Heart right ventricle (tissue), 16 donors: ENCODE measurements at regions of chr18 and their contacts with region 1.

Region 1: GRCh38 chr18:76803814-76804213 is 18.5 kb upstream of the ZNF236 start:
- DNase-seq: peak; percentile 30 to 63
- ATAC-seq: peak in 5 of 8 donors; percentile 60 to 69 (median 64)
- H3K4me3 ChIP-seq: no peak overlapping the region
- H3K27ac ChIP-seq: no peak overlapping the region
- H3K4me1 ChIP-seq: peaks cover 0 to 18% (median 6%) of the 10 kb centered on the region in 9 donors
- H3K27me3 ChIP-seq: peaks cover 0 to 25% (median 9%) of the 10 kb centered on the region in 7 donors
- CTCF ChIP-seq: peak; percentile 47 to 84 (median 79)

Region 2: GRCh38 chr18:76741365-76741764 is 62.4 kb before region 1 on chr18:
- intact Hi-C with region 1: no loop called
- DNase-seq: no peak
- ATAC-seq: no peak
- H3K4me3 ChIP-seq: no peak overlapping the region
- H3K27ac ChIP-seq: no peak overlapping the region
- H3K4me1 ChIP-seq: peaks cover 0 to 14% (median 0%) of the 10 kb centered on the region in 9 donors
- H3K27me3 ChIP-seq: peaks cover 0 to 14% (median 0%) of the 10 kb centered on the region in 7 donors
- CTCF ChIP-seq: no peak

Region 3: DNA sequence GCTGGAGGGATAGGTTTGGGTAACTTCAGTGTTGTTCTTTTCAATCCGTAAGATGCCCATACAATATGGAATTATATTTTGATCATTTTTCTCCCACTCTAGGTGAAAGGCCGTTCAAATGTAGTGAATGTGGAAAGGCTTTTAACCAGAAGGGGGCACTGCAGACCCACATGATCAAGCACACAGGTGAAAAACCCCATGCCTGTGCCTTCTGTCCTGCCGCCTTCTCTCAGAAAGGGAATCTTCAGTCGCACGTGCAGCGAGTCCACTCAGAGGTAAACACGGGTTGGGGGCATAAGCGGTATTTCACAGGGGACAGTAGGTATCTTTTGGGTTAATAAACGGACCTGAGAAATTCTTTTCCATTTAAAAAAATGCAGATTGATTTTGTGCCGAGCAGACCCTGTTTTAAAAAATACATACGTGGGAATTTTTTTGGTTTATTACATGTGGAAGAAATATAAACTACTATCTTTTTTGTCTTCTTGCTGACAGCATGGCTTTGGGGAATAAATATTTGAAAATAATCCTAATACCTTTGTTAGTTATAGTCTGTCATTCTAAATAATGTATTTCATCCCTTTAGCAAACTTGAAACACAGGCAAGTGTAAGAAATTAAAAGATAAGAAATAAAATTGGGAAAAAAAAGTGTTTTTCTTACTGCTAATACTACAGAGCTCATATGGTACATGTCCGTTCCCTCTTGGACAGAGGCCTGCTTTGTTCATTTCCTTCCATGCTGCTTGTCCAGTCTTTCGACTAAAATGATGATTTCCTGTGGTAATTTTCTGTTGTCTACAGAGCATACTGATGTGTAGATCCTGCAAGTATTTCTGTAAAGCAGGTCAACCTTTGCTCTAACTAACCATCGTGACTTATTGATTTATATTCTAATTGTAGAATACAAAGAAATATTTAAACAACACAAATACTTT is 71.8 kb after region 1 on chr18:
- intact Hi-C with region 1: loop called in 3 of 10 experiments (anchors 5 to 10 kb)
- DNase-seq: peak in 1 of 2 donors; percentile 13
- ATAC-seq: peak in 1 of 8 donors; percentile 56
- H3K4me3 ChIP-seq: no peak overlapping the region
- H3K27ac ChIP-seq: no peak overlapping the region
- H3K4me1 ChIP-seq: no peaks in the 10 kb centered on the region
- H3K27me3 ChIP-seq: no peaks in the 10 kb centered on the region
- CTCF ChIP-seq: peak; percentile 17 to 69 (median 63)

Region 4: DNA sequence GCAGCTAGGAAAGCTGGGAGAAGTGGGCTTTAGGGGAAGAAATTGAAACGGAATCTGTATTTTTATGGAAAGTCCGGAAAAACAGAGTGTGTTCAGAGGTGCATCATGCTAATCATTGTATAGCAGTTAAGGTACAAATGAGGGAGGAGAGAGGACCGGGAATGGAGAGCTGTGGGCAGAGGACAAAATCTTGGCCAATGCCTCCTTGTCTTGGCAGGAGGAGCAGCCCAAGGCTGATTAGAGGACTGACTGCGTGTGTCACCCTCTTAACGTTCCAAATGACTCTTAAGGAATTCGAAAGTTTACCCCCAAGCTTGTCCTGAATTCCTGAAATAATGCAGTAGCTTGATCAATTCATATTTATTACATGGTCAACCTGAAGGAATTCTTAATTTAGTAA is 99.6 kb after region 1 on chr18:
- intact Hi-C with region 1: loop called in 2 of 10 experiments (anchors 10 kb)
- DNase-seq: no peak
- ATAC-seq: peak in 4 of 8 donors; percentile 49 to 84 (median 72)
- H3K4me3 ChIP-seq: no peak overlapping the region
- H3K27ac ChIP-seq: no peak overlapping the region
- H3K4me1 ChIP-seq: no peaks in the 10 kb centered on the region
- H3K27me3 ChIP-seq: no peaks in the 10 kb centered on the region
- CTCF ChIP-seq: no peak

Region 5: DNA sequence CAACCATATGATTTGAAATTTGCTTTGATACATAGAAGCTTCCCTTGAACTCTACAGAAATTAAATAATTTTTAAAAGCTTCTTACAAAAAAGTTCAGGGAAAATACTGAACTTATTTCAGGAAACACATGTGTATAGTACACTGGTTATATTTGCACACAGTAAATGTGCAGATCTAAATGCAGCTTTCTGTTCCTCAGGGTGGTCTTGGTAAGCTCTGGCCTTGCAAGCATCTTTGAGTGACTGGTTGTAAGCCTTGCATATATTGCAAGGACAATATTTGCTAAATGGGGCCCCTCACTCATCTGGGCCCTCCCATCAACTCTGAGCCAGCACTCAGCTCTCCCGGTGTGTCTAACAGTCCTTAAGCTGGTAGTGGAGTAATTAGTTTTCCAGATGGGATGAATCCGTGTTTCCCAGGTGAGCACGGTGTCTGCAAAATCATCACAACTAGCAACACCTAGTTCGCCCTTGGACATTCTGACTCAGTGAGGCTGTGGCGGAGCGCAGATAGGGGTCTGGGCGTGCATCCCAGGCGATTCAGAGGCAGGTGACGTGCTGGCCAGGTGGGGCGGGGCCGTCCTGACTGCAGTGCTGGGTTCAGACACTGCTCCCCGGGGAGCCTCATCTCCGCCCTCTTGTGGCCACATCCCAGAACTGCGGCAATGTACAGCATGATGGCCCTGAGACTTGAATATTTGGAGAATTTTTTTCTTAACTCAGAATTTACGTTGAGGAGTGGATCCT is 179.2 kb after region 1 on chr18:
- intact Hi-C with region 1: loop called in 9 of 10 experiments (anchors 1 to 10 kb)
- DNase-seq: peak; percentile 75 to 85
- ATAC-seq: peak in 7 of 8 donors; percentile 77 to 87 (median 80)
- H3K4me3 ChIP-seq: no peak overlapping the region
- H3K27ac ChIP-seq: no peak overlapping the region
- H3K4me1 ChIP-seq: peaks cover 0 to 20% (median 3%) of the 10 kb centered on the region in 9 donors
- H3K27me3 ChIP-seq: no peaks in the 10 kb centered on the region
- CTCF ChIP-seq: peak; percentile 74 to 97 (median 91)

Region 6: DNA sequence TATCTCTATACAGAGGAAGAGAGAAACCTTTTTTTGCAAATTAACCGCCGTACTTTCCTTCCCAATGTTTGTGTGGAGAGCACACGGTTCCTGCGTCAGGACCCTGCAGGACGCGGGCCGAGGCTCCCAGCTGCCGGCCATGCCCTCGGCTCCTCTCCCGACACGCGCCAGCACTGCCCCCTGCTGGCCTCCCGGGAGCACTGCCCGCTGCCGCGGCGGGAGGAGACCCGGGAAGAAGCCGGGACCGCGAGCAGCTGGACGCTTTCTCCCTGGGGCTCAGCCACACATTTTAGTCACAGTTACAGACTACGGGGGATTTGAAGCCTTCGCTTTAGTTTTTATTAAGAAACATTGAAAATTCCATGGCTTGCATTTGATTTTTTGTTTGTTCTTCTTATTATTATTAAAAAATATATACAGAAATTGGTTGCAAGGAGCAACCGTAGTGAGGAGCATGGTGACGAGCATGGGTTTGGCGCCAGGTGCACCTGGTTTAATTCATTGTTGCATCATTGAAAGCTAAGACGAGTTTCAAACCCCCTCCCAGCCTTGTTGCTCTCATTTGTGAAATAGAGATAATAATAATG is 847.1 kb after region 1 on chr18:
- intact Hi-C with region 1: loop called in 2 of 10 experiments (anchors 5 to 10 kb)
- DNase-seq: peak; percentile 63 to 80
- ATAC-seq: peak; percentile 83 to 96 (median 92)
- H3K4me3 ChIP-seq: peak overlapping the region in 1 of 10 donors; percentile 8
- H3K27ac ChIP-seq: no peak overlapping the region
- H3K4me1 ChIP-seq: peaks cover 0 to 7% (median 0%) of the 10 kb centered on the region in 9 donors
- H3K27me3 ChIP-seq: peaks cover 0 to 18% (median 12%) of the 10 kb centered on the region in 7 donors
- CTCF ChIP-seq: peak; percentile 69 to 95 (median 89)